Activated naive CD4-positive, alpha-beta T cell treated with anti-CD3 and anti-CD28 coated beads for 36 hours (primary cell): ENCODE measurements at regions of chr11 and their contacts with region 1.

Region 1: GRCh38 chr11:62612366-62613290 is at the starts of genes EML3 and ROM1:
- DNase-seq: peak; percentile 84
- H3K4me3 Mint-ChIP-seq: peak within 1 kb of the TSS; percentile 99
- H3K27ac Mint-ChIP-seq: peak within 1 kb of the TSS; percentile 98
- H3K4me1 Mint-ChIP-seq: peaks cover 54% of the 10 kb centered on the region
- H3K27me3 Mint-ChIP-seq: no peaks in the 10 kb centered on the region
- total RNA-seq, gene EML3: 81.8 to 97.1 TPM
- total RNA-seq, gene ROM1: 0.52 to 1.0 TPM

Region 2: DNA sequence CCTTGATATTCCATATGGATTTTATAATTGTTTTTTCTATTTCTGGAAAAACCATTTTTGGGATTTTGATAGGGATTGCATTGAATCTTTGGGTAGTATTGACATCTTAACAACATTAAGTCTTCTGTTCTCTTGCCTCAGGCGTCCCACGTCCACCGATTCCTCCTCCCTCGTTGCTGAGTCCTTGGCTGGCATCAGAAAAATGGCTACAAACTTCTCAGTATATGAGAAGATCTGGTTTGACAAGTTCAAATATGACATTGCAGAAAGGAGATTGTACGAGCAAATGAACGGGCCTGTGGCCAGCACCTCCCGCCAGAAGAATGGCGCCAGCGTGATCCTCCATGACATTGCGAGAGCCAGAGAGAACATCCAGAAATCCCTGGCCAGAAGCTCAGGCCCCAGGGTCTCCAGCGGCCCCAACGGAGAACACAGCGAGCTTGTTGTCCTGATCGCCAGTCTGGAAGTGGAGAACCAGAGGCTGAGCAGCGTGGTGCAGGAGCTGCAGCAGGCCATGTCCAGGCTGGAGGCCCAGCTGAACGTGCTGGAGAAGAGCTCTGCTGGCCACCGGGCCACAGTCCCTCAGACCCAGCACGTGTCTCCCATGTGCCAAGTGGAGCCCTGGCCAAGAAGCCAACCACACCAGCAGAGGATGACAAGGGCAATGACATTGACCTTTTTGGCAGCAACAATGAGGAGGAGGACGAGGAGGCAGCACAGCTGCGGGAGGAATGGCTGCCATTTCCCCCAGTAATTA is 443.4 kb before region 1 on chr11:
- CTCF ChIA-PET with region 1: no interaction called
- intact Hi-C with region 1: no loop called
- DNase-seq: no peak
- H3K4me3 Mint-ChIP-seq: no peak overlapping the region
- H3K27ac Mint-ChIP-seq: no peak overlapping the region
- H3K4me1 Mint-ChIP-seq: peaks cover 4% of the 10 kb centered on the region
- H3K27me3 Mint-ChIP-seq: peaks cover 19% of the 10 kb centered on the region

Region 3: GRCh38 chr11:62665075-62665598 is 52.5 kb after region 1 on chr11 and contains the starts of genes C11orf98 and CSKMT:
- CTCF ChIA-PET with region 1: interaction called, 4 read pairs
- intact Hi-C with region 1: loop called (anchors 1 kb)
- DNase-seq: peak; percentile 96
- H3K4me3 Mint-ChIP-seq: peak within 1 kb of the TSS; percentile 98
- H3K27ac Mint-ChIP-seq: peak within 1 kb of the TSS; percentile 88
- H3K4me1 Mint-ChIP-seq: peaks cover 42% of the 10 kb centered on the region
- H3K27me3 Mint-ChIP-seq: no peaks in the 10 kb centered on the region
- total RNA-seq, gene C11orf98: 73.5 to 76.5 TPM
- total RNA-seq, gene CSKMT: 35.2 to 44.0 TPM

Region 4: DNA sequence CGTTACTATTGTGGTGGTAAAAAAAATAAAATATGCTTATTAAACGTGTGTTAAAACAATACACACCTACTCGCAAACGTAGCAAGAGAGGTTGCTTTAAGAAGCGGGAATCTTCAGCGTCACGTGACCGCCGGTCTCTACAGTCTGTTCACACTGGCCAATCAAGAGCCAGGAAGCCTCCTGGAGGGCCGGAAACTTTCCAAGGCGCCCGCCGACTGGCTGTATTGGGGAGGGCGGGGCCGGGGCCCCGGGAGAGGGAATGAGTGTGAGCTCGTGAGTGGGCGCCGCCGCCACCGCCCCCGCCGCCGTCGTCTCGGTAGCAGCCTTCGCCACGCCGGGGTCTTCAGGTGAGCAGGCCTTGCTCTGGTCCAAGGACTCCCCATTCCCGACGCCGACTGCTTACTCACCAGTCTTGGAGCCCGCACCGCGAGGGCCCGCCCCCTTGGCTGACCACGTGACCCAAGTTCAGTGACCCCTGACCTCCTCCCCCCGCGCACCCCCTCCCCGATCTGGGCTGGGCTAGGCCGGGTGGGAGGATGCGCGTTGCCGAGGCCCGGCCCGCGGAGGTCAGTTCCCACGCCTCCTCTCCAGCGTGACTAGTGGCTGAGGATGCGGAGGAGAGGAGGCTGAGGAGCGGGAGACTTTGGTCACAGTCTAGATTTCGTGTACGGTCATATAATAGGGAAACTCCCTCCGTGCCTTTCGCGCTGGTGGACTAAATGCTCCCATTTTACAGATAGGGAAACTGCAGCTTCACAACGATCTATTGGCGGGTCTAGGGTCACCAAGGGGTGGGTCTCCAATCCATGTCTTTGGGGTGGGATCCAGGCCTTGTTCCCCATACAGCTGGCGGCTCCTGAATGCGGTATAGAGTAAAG is 158.8 kb after region 1 on chr11 and contains the start of gene TAF6L:
- CTCF ChIA-PET with region 1: no interaction called
- intact Hi-C with region 1: loop called (anchors 5 kb)
- DNase-seq: peak; percentile 95
- H3K4me3 Mint-ChIP-seq: peak within 1 kb of the TSS; percentile 80
- H3K27ac Mint-ChIP-seq: peak within 1 kb of the TSS; percentile 91
- H3K4me1 Mint-ChIP-seq: peaks cover 25% of the 10 kb centered on the region
- H3K27me3 Mint-ChIP-seq: no peaks in the 10 kb centered on the region
- total RNA-seq, gene TAF6L: 8.9 to 10.5 TPM